ENCODE measurements at regions of chr6 and their contacts with region 1.

Region 1: GRCh38 chr6:43769526-43770416 is at the start of gene VEGFA:
- DNase-seq: peak; percentile 79 to 93 (median 86)
- ATAC-seq: peak; percentile 91
- H3K4me3 ChIP-seq: peak within 1 kb of the TSS; percentile 73
- H3K4me3 Mint-ChIP-seq: peak within 1 kb of the TSS; percentile 88 to 99 (median 94)
- H3K27ac ChIP-seq: peak within 1 kb of the TSS; percentile 45
- H3K27ac Mint-ChIP-seq: peak within 1 kb of the TSS in 8 of 9 donors; percentile 70 to 85 (median 84)
- H3K4me1 ChIP-seq: peaks cover 3 to 4% of the 10 kb centered on the region in 2 donors
- H3K4me1 Mint-ChIP-seq: peaks cover 8 to 34% (median 16%) of the 10 kb centered on the region in 7 donors
- H3K27me3 ChIP-seq: peaks cover 6 to 8% of the 10 kb centered on the region in 2 donors
- H3K27me3 Mint-ChIP-seq: peaks cover 7 to 21% (median 16%) of the 10 kb centered on the region in 5 donors
- total RNA-seq, gene VEGFA: 0.60 to 72.1 (median 19.4) TPM

Region 2: GRCh38 chr6:43635387-43636307 is 134.1 kb before region 1 on chr6 and contains the start of gene MAD2L1BP:
- CTCF ChIA-PET with region 1: interaction called, 3 read pairs
- POLR2A ChIA-PET with region 1: interaction called, 3 read pairs
- intact Hi-C with region 1: loop called in 1 of 2 experiments (anchors 1 kb)
- DNase-seq: peak; percentile 65 to 92 (median 88)
- ATAC-seq: peak; percentile 94
- H3K4me3 ChIP-seq: peak within 1 kb of the TSS; percentile 91
- H3K4me3 Mint-ChIP-seq: peak within 1 kb of the TSS; percentile 92 to 100 (median 99)
- H3K27ac ChIP-seq: peak within 1 kb of the TSS; percentile 87
- H3K27ac Mint-ChIP-seq: peak within 1 kb of the TSS; percentile 93 to 98 (median 96)
- H3K4me1 ChIP-seq: peaks cover 28 to 30% of the 10 kb centered on the region in 2 donors
- H3K4me1 Mint-ChIP-seq: peaks cover 34 to 65% (median 48%) of the 10 kb centered on the region in 7 donors
- H3K27me3 ChIP-seq: no peaks in the 10 kb centered on the region
- H3K27me3 Mint-ChIP-seq: peaks cover 0 to 3% (median 0%) of the 10 kb centered on the region in 5 donors
- total RNA-seq, gene MAD2L1BP: 25.2 to 44.5 (median 28.0) TPM

Region 3: DNA sequence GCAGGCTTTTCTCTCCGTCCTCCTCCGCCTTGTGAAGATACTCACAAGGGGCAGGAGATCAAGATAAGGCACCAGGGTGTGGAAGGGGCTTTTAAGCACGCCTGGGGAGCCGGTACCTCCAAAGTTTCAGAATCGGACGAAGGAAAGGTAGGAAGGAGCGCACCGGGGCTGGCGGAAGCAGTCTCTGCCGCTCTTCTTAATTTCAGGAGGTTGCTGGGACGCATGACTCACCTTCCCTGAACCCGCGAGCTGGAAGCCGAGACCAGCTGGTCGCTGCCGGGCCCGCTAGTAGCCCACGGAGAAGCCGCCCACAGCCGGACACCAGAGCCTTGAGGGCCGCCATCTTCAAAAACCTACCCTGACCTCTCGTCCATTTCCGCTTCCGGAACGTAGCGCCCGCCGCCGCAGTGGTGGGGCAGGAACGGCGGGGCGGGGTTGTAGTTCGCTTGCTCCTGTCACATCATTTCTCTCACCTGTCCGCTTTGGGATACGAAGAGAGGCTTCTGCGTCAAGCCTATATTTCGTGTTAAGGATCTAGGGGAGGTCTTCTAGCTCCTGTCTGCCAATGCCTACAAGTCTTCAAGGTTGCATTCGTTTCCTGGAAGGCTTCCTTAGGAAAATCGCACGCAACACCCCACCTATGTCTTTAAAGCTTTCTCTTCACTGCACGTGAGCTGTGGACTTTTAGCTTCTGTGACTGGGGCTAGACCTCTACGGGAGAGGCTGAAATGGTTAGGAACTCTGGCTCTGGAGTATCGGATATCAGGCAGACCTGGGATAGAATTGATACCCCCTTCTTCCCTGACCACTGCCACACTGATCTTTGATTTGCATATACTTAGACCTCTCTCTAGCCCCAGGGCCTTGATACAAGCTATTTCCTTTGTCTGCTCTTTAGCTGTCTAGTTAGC is 82.1 kb before region 1 on chr6 and contains the start of gene MRPS18A:
- CTCF ChIA-PET with region 1: no interaction called
- POLR2A ChIA-PET with region 1: no interaction called
- intact Hi-C with region 1: loop called in 1 of 2 experiments (anchors 1 kb)
- DNase-seq: peak; percentile 53 to 82 (median 72)
- ATAC-seq: peak; percentile 97
- H3K4me3 ChIP-seq: peak within 1 kb of the TSS; percentile 98
- H3K4me3 Mint-ChIP-seq: peak within 1 kb of the TSS; percentile 94 to 99 (median 97)
- H3K27ac ChIP-seq: peak within 1 kb of the TSS; percentile 81
- H3K27ac Mint-ChIP-seq: peak within 1 kb of the TSS; percentile 87 to 96 (median 94)
- H3K4me1 ChIP-seq: peaks cover 10 to 22% of the 10 kb centered on the region in 2 donors
- H3K4me1 Mint-ChIP-seq: peaks cover 28 to 55% (median 52%) of the 10 kb centered on the region in 7 donors
- H3K27me3 ChIP-seq: no peaks in the 10 kb centered on the region
- H3K27me3 Mint-ChIP-seq: peaks cover 0 to 3% (median 0%) of the 10 kb centered on the region in 5 donors
- total RNA-seq, gene MRPS18A: 20.9 to 39.2 (median 28.7) TPM

Region 4: GRCh38 chr6:43838276-43839036 is 68.7 kb after region 1 on chr6:
- CTCF ChIA-PET with region 1: no interaction called
- POLR2A ChIA-PET with region 1: no interaction called
- intact Hi-C with region 1: loop called in 1 of 2 experiments (anchors 1 kb)
- DNase-seq: no peak
- ATAC-seq: peak; percentile 80
- H3K4me3 ChIP-seq: no peak overlapping the region
- H3K4me3 Mint-ChIP-seq: no peak overlapping the region
- H3K27ac ChIP-seq: no peak overlapping the region
- H3K27ac Mint-ChIP-seq: no peak overlapping the region
- H3K4me1 ChIP-seq: no peaks in the 10 kb centered on the region
- H3K4me1 Mint-ChIP-seq: no peaks in the 10 kb centered on the region
- H3K27me3 ChIP-seq: no peaks in the 10 kb centered on the region
- H3K27me3 Mint-ChIP-seq: peaks cover 0 to 8% (median 0%) of the 10 kb centered on the region in 5 donors

Region 5: GRCh38 chr6:44074439-44075136 is 304.8 kb after region 1 on chr6:
- CTCF ChIA-PET with region 1: interaction called, 43 read pairs
- POLR2A ChIA-PET with region 1: no interaction called
- intact Hi-C with region 1: loop called (anchors 1 kb)
- DNase-seq: peak; percentile 44 to 75 (median 63)
- ATAC-seq: peak; percentile 62
- H3K4me3 ChIP-seq: peak overlapping the region; percentile 65
- H3K4me3 Mint-ChIP-seq: peak overlapping the region; percentile 71 to 98 (median 84)
- H3K27ac ChIP-seq: no peak overlapping the region
- H3K27ac Mint-ChIP-seq: peak overlapping the region in 5 of 9 donors; percentile 2 to 80 (median 19)
- H3K4me1 ChIP-seq: peaks cover 12 to 16% of the 10 kb centered on the region in 2 donors
- H3K4me1 Mint-ChIP-seq: peaks cover 0 to 36% (median 15%) of the 10 kb centered on the region in 7 donors
- H3K27me3 ChIP-seq: no peaks in the 10 kb centered on the region
- H3K27me3 Mint-ChIP-seq: peaks cover 0 to 23% (median 12%) of the 10 kb centered on the region in 5 donors

Region 6: DNA sequence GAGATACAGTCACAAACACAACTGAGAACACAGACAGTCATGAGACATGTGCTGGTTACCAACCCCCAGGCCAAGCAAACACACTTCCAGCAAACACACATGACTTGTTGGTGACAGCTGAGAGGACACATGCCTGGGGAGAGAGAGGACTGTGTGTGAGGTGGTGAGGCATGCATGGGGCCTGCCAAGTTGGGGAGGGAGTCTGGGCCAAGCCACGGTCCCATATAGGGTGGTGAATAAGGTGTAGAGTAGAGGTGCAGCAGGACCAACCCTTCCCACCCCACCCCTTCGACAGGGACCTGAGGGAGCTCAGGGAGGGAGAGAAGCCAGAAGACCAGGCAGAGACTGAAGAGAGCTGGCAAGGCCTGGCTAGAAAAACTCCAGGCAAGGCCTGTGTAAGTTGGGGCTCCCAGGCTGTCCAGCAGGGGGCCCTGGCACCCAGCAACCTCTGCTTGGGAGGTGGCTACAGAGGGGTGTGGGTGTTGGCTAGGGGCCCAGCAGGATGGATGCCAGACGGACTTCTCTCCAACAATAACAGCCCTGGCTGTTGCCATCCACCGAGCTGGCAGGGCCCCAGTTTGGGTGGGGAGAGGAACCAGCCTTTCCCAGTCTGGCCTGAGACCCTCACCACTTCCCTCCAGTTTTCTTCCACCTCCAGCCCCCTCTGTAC is 451.7 kb after region 1 on chr6:
- CTCF ChIA-PET with region 1: no interaction called
- POLR2A ChIA-PET with region 1: no interaction called
- intact Hi-C with region 1: loop called in 1 of 2 experiments (anchors 2 kb)
- DNase-seq: peak; percentile 56 to 75 (median 71)
- ATAC-seq: peak; percentile 75
- H3K4me3 ChIP-seq: no peak overlapping the region
- H3K4me3 Mint-ChIP-seq: peak overlapping the region in 7 of 10 donors; percentile 27 to 93 (median 59)
- H3K27ac ChIP-seq: no peak overlapping the region
- H3K27ac Mint-ChIP-seq: peak overlapping the region in 5 of 9 donors; percentile 26 to 91 (median 48)
- H3K4me1 ChIP-seq: peaks cover 15 to 16% of the 10 kb centered on the region in 2 donors
- H3K4me1 Mint-ChIP-seq: peaks cover 6 to 48% (median 31%) of the 10 kb centered on the region in 7 donors
- H3K27me3 ChIP-seq: no peaks in the 10 kb centered on the region
- H3K27me3 Mint-ChIP-seq: peaks cover 0 to 18% (median 0%) of the 10 kb centered on the region in 5 donors

Region 7: DNA sequence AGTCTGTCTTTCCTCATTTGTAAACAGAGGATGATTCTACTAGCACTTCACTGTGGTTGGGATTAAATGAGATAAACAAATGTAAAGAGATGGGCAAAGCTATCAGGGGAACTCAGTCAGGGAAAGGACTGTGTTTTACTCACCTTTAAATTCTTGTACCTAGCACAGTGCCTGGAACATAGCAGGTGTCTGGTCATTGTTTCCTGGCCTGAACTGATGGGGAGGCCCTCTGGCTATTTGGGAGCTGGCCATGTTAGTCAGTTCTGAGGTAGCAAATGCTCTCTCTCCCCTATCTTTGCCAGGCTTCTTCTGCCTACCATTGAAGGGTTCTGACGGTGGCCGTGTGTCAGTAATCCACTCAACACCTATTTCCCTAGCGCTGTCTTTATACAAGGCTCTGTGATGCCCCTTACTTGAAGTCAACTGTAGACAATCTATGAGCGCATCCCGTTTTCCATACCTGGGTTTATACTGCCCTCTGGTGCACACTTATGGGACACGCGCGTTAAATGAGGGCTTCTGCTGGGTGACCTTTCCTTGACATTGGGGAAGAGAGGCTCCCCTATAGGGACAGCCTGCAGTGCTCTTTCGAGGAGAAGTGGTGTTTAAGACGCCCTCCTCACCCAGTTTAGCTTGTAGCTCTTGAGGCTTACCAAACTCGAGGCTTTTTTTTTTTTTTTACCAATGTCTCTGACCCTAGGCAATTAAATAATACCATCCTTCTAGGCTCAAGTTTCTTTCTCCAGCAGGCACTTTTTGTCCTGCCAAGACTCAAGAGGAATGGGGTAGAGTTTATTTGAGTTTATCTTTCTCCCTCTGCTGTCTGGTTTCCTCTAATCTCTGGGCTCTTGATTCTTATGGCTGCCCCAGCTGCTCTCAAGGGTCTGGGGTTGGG is 568.7 kb after region 1 on chr6:
- CTCF ChIA-PET with region 1: no interaction called
- POLR2A ChIA-PET with region 1: no interaction called
- intact Hi-C with region 1: loop called in 1 of 2 experiments (anchors 1 kb)
- DNase-seq: peak; percentile 43 to 67 (median 62)
- ATAC-seq: peak; percentile 92
- H3K4me3 ChIP-seq: no peak overlapping the region
- H3K4me3 Mint-ChIP-seq: no peak overlapping the region
- H3K27ac ChIP-seq: no peak overlapping the region
- H3K27ac Mint-ChIP-seq: no peak overlapping the region
- H3K4me1 ChIP-seq: no peaks in the 10 kb centered on the region
- H3K4me1 Mint-ChIP-seq: peaks cover 0 to 4% (median 0%) of the 10 kb centered on the region in 7 donors
- H3K27me3 ChIP-seq: no peaks in the 10 kb centered on the region
- H3K27me3 Mint-ChIP-seq: peaks cover 18 to 33% (median 24%) of the 10 kb centered on the region in 5 donors